ENCODE measurements at regions of chr12 and their contacts with region 1.

Region 1: DNA sequence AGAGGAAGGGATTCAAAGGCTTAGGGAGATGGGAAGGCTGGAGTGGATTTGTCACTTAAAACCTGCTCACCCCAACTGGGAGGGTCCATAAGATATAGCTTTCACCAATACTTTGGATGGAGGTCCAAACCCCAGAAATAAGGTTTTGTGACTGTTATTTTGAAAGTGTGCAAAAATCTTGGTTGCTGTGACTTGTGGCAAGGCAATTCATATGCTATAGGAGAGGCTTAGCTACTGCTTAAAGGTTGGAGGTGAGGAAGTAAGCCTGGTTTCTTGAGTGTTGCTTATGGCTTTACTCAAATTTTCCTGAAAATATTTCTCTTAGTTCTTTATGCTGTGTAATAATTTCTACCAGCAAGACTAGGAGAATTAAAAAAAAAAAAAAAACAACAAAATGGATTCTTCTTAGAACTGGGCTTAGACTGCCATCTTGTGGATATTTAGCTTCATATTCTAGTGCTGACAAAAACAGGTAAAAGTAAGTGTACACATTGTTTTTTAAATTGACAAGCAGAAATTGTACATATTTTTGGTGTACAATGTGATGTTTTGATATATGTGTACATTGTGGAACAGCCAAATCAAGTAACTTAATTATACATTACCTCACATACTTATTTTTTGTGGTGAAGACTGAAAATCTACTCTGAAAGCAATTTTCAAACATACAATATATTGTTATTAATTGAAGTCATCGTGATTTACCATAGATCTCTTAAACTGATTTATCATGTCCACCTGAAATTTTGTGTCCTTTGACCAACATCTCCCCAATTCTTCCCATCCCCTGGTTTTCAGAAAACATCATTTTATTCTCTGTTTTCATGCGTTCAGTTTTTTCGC is 23.0 kb downstream of the PDE6H start:
- DNase-seq: no peak
- H3K4me3 ChIP-seq: no peak overlapping the region
- CTCF ChIP-seq: no peak
- POLR2A ChIP-seq: no peak

Region 2: DNA sequence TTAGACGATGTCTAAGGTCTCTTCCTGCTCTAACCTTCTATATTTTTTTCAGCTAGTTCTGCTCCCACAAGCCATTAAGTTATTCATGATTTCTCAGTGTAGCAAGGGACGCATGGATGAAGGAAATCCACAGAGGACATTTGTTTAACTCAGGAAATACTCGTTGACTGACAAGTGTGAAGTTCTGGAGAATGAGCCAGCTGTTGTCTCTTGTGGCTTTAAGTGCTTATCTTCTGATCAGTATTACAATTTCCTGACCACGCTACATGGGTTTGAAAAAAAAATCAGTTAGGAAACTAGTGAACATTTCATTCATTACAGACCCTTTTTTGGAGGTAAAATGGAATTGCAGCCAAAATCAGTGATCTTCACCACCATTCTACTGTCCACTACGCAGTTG is 352.6 kb before region 1 on chr12:
- intact Hi-C with region 1: loop called (anchors 10 kb)
- DNase-seq: no peak
- H3K4me3 ChIP-seq: no peak overlapping the region
- CTCF ChIP-seq: no peak
- POLR2A ChIP-seq: no peak

Region 3: GRCh38 chr12:14843425-14843887 is 152.3 kb before region 1 on chr12 and contains the start of gene ART4:
- intact Hi-C with region 1: loop called (anchors 1 kb)
- DNase-seq: no peak
- H3K4me3 ChIP-seq: no peak within 1 kb of the TSS
- CTCF ChIP-seq: no peak
- POLR2A ChIP-seq: no peak
- total RNA-seq, gene ART4: 0.17 to 0.42 (median 0.17) TPM in 3 of 4 donors, not detected in the other